Heart right ventricle (tissue), 16 donors: ENCODE measurements at regions of chr15 and their contacts with region 1.

Region 1: GRCh38 chr15:68550481-68551295 is 28.1 kb upstream of the CORO2B start:
- DNase-seq: peak; percentile 67 to 72
- ATAC-seq: peak in 7 of 8 donors; percentile 34 to 56 (median 48)
- H3K4me3 ChIP-seq: no peak overlapping the region
- H3K27ac ChIP-seq: no peak overlapping the region
- H3K4me1 ChIP-seq: peaks cover 0 to 11% (median 0%) of the 10 kb centered on the region in 9 donors
- H3K27me3 ChIP-seq: no peaks in the 10 kb centered on the region
- CTCF ChIP-seq: peak; percentile 89 to 96 (median 94)

Region 2: GRCh38 chr15:68749793-68750192 is 199.1 kb after region 1 on chr15:
- intact Hi-C with region 1: no loop called
- DNase-seq: no peak
- ATAC-seq: peak in 7 of 8 donors; percentile 33 to 86 (median 78)
- H3K4me3 ChIP-seq: no peak overlapping the region
- H3K27ac ChIP-seq: peak overlapping the region in 1 of 10 donors; percentile 28
- H3K4me1 ChIP-seq: peaks cover 0 to 5% (median 0%) of the 10 kb centered on the region in 9 donors
- H3K27me3 ChIP-seq: no peaks in the 10 kb centered on the region
- CTCF ChIP-seq: no peak

Region 3: DNA sequence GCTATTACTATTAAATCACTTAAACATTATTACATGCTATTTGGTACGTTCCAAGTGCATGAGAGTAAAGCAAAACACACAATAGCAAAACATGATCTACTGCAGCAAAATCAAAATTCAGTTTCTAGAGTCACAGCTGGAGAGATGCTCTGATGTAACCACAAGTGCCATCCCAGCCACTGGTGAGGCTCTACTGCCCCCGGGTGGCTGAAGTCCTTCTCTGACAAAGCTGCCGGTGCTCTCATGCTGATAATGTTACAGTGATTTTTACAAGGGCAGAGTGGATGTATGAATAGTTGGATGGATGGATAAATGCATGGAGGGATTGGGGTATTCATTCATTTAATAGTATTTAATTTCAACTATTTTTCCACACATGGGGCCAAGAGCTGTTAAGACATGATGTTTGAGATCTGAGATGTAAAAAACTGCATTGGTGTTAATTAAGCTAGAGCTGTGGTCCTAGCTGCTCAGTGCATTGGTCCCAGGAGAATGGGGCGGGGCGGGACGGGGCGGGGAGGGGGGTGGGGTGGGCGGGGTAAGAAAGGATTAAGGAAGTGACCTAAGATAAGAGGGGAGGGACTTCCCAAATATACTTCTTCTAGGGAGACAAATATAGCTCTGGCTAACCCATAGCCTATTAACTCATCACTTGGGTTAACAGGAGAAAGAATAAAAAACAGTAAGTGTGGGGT is 374.3 kb after region 1 on chr15:
- intact Hi-C with region 1: loop called in 9 of 10 experiments (anchors 2 to 10 kb)
- DNase-seq: peak; percentile 69 to 74
- ATAC-seq: peak; percentile 53 to 92 (median 86)
- H3K4me3 ChIP-seq: no peak overlapping the region
- H3K27ac ChIP-seq: no peak overlapping the region
- H3K4me1 ChIP-seq: no peaks in the 10 kb centered on the region
- H3K27me3 ChIP-seq: peaks cover 0 to 4% (median 0%) of the 10 kb centered on the region in 7 donors
- CTCF ChIP-seq: peak; percentile 37 to 88 (median 84)